HepG2 (cell line): ENCODE measurements at regions of chr5 and their contacts with region 1.

Region 1: DNA sequence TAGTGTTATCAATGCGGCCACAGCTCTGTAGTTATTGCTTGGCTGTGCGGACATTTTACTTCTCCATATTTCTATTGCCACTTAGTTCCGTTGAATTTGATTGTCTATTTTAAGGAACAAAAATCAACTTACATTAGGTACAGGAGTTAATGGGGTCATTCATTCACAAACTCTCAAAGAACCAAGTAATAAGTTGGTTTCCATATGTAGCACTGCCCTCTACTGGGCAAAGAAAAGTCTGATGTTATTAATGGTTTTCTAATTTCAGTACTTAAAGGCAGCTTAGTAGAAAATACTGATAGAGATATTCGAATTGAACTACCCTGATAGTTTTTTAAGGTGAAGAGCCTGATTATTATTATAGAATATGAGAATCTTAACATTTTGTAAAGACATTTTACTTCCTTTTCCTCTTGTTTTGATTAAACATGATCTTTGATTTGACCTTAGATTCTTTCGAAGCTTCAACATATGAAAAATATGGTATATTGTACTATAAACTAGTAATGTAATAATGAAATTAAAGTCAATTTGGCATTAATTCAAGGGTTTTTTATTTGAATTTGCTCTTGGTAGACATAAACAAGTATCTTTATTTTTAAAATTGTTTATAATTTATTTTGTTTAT is 119.5 kb upstream of the CTNND2 start:
- DNase-seq: peak; percentile 33
- ATAC-seq: 0 out of 3 replicates have a peak, but pooled peaks have one; percentile 40
- H3K4me3 ChIP-seq: no peak overlapping the region
- H3K27ac ChIP-seq: no peak overlapping the region
- H3K4me1 ChIP-seq: no peaks in the 10 kb centered on the region
- H3K27me3 ChIP-seq: no peaks in the 10 kb centered on the region
- CTCF ChIP-seq: peak; percentile 62
- EP300 ChIP-seq: no peak
- POLR2A ChIP-seq: no peak
- RAD21 ChIP-seq: no peak

Region 2: GRCh38 chr5:11046160-11046559 is 977.6 kb before region 1 on chr5:
- CTCF ChIA-PET with region 1: no interaction called
- POLR2A ChIA-PET with region 1: no interaction called
- in situ Hi-C with region 1: no loop called
- intact Hi-C with region 1: loop called (anchors 5 kb)
- DNase-seq: no peak
- ATAC-seq: peak; percentile 46; the same call in 2 of the 3 replicates
- H3K4me3 ChIP-seq: no peak overlapping the region
- H3K27ac ChIP-seq: no peak overlapping the region
- H3K4me1 ChIP-seq: peaks cover 6% of the 10 kb centered on the region; the same call in 1 of the 2 replicates
- H3K27me3 ChIP-seq: no peaks in the 10 kb centered on the region
- CTCF ChIP-seq: peak; percentile 58
- EP300 ChIP-seq: no peak
- POLR2A ChIP-seq: no peak
- RAD21 ChIP-seq: no peak

Region 3: GRCh38 chr5:11251262-11251661 is 772.5 kb before region 1 on chr5:
- CTCF ChIA-PET with region 1: no interaction called
- POLR2A ChIA-PET with region 1: no interaction called
- in situ Hi-C with region 1: loop called (anchors 25 kb)
- intact Hi-C with region 1: no loop called
- DNase-seq: peak; percentile 1
- ATAC-seq: no peak
- H3K4me3 ChIP-seq: no peak overlapping the region
- H3K27ac ChIP-seq: no peak overlapping the region
- H3K4me1 ChIP-seq: no peaks in the 10 kb centered on the region
- H3K27me3 ChIP-seq: no peaks in the 10 kb centered on the region
- CTCF ChIP-seq: no peak
- EP300 ChIP-seq: no peak
- POLR2A ChIP-seq: no peak
- RAD21 ChIP-seq: no peak

Region 4: DNA sequence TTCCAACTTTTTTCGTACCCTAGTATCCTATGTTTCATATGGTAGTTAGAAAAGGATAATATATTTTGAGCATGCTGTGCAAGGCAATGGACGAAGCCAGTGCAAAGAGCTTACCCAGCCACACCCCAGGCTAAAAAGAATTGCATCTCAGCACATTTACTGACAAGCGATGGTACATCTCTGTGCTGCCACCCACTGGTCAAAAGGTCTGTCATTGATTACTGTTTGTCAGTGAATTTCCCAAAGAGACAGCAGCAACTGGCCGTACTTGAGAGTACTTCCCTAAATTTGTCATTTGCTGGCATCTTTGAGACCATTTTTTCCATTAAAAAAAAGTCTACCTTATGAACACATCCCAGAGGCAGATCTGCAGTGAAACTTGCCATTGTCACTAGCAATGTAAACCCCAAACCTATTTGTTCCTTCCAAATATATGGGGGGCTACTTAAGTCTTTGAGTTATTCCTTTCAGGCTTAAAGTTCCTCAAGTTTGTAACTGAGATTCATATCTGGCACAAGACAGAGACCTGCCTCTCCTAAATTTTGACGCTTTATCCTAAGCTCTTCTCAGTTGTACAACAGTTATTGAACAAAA is 303.7 kb before region 1 on chr5:
- CTCF ChIA-PET with region 1: no interaction called
- POLR2A ChIA-PET with region 1: no interaction called
- in situ Hi-C with region 1: no loop called
- intact Hi-C with region 1: loop called (anchors 5 kb)
- DNase-seq: peak; percentile 48
- ATAC-seq: peak; percentile 83
- H3K4me3 ChIP-seq: no peak overlapping the region
- H3K27ac ChIP-seq: no peak overlapping the region
- H3K4me1 ChIP-seq: no peaks in the 10 kb centered on the region
- H3K27me3 ChIP-seq: no peaks in the 10 kb centered on the region
- CTCF ChIP-seq: peak; percentile 67
- EP300 ChIP-seq: no peak
- POLR2A ChIP-seq: no peak
- RAD21 ChIP-seq: no peak

Region 5: DNA sequence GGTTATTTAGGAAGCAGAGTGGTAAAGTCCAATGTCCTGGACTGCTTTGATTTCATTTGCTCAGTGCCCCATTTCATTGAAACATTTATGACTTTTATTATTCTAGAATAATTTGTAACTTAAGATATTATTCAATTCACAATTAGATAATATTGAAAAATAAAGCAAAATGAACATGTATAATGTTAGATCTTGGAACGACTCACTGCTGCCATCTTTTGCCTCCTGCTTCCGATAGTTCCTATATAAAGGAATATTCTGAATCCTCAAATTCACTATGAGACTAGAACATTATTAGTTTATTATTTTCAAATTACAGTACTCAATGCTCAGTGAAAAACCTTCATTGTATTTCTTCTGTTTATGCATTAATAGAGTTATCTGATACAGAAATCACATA is 117.2 kb before region 1 on chr5:
- CTCF ChIA-PET with region 1: no interaction called
- POLR2A ChIA-PET with region 1: no interaction called
- in situ Hi-C with region 1: no loop called
- intact Hi-C with region 1: no loop called
- DNase-seq: no peak
- ATAC-seq: no peak
- H3K4me3 ChIP-seq: no peak overlapping the region
- H3K27ac ChIP-seq: no peak overlapping the region
- H3K4me1 ChIP-seq: no peaks in the 10 kb centered on the region
- H3K27me3 ChIP-seq: peaks cover 4 to 34% of the 10 kb centered on the region in 2 experiments
- CTCF ChIP-seq: no peak
- EP300 ChIP-seq: no peak
- POLR2A ChIP-seq: no peak
- RAD21 ChIP-seq: no peak

Region 6: GRCh38 chr5:11918463-11919045 is 105.2 kb before region 1 on chr5:
- CTCF ChIA-PET with region 1: no interaction called
- POLR2A ChIA-PET with region 1: no interaction called
- in situ Hi-C with region 1: no loop called
- intact Hi-C with region 1: no loop called
- DNase-seq: no peak
- ATAC-seq: no peak
- H3K4me3 ChIP-seq: no peak overlapping the region
- H3K27ac ChIP-seq: no peak overlapping the region
- H3K4me1 ChIP-seq: no peaks in the 10 kb centered on the region
- H3K27me3 ChIP-seq: no peaks in the 10 kb centered on the region
- CTCF ChIP-seq: no peak
- EP300 ChIP-seq: no peak
- POLR2A ChIP-seq: no peak
- RAD21 ChIP-seq: no peak